Activated CD4-positive, alpha-beta T cell treated with anti-CD3 and anti-CD28 coated beads, Interleukin-2, amount 10 ng/mL, durations not matched to agents 24 days and 14 days (primary cell): ENCODE measurements at regions of chr2 and their contacts with region 1.

Region 1: DNA sequence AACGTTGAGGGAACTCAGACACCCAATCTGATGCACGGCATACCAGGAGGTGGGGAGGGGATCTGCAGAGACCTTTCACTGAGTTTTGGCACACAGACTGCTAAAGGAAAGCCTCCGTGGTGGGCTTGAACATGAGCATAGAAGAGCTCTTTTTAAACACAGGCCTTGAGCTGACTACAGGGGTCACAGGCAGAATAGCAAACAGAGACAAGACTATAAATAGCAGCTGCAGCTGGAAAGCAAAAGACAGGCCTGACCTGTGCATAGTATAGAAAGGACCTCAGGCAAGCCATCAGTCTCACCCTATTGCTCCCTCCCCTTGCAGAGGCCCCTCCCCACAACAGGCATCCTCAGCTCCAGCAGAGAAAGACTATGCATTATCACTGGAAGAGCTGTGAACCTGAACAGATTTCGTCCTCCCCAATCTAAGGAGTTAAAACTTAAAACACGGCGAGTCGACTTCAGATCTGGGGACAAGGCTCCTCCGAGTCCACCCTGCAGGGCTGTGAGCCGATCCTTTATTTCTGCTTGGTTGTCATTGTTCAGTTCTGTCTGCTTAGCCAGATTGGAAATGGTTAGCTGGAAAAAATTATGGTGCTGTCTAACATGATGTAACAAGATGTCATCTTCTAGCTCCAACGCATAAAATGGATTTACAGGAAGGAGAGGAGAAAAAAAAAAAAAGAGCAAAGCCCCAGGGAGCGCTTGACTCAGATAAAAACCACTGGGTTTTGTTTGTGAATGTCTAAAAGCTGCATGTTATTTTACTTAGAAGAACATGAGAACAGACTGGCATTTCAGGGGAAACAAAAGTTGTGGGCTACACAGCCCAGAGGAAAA is 25.2 kb upstream of the LCLAT1 start:
- DNase-seq: peak; percentile 76
- H3K4me3 Mint-ChIP-seq: peak overlapping the region; percentile 62
- H3K27ac Mint-ChIP-seq: peak overlapping the region; percentile 89
- H3K4me1 Mint-ChIP-seq: peaks cover 34% of the 10 kb centered on the region
- H3K27me3 Mint-ChIP-seq: no peaks in the 10 kb centered on the region

Region 2: DNA sequence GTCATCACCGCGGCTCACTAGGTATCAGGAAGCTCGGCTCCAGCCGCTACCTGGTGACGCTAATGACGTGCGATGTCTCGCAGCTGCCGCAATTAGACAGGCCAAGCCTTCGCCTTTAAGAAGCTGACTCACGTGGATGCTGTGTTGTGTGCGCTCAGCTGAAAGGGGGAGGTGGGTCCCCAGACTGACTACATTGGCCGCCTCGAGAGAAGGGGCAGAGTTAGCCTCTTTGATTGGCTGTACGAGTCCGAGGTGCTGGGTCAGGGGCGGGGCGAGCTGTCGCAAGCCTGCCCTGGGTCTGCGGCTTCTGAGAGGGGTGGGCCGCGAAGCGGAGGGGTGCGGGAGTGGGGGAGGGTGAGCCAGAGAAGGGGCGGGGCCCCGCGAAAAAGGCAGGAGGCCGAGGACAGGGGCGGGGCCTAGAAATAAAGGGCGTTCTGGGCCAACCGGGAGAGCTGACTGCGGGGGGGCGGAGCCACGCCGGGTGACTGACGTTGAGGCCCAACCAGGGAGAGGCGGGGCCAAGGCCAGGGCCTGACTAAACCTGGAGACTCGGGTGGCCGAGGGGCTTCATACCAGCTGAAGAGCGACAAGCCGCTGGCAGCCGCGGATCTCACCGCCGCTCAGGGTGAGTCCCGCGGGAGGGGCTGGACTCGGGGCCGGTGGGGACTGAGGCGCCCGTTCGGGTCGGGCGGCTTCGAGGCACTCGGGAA is 275.2 kb before region 1 on chr2 and contains the start of gene YPEL5:
- intact Hi-C with region 1: loop called (anchors 2 kb)
- DNase-seq: peak; percentile 100
- H3K4me3 Mint-ChIP-seq: peak within 1 kb of the TSS; percentile 87
- H3K27ac Mint-ChIP-seq: peak within 1 kb of the TSS; percentile 97
- H3K4me1 Mint-ChIP-seq: peaks cover 32% of the 10 kb centered on the region
- H3K27me3 Mint-ChIP-seq: no peaks in the 10 kb centered on the region
- total RNA-seq, gene YPEL5: 16.8 and 19.6 TPM in 2 replicates

Region 3: GRCh38 chr2:30225131-30225762 is 196.6 kb before region 1 on chr2:
- intact Hi-C with region 1: loop called (anchors 1 kb)
- DNase-seq: peak; percentile 88
- H3K4me3 Mint-ChIP-seq: peak overlapping the region; percentile 89
- H3K27ac Mint-ChIP-seq: peak overlapping the region; percentile 98
- H3K4me1 Mint-ChIP-seq: peaks cover 63% of the 10 kb centered on the region
- H3K27me3 Mint-ChIP-seq: no peaks in the 10 kb centered on the region

Region 4: DNA sequence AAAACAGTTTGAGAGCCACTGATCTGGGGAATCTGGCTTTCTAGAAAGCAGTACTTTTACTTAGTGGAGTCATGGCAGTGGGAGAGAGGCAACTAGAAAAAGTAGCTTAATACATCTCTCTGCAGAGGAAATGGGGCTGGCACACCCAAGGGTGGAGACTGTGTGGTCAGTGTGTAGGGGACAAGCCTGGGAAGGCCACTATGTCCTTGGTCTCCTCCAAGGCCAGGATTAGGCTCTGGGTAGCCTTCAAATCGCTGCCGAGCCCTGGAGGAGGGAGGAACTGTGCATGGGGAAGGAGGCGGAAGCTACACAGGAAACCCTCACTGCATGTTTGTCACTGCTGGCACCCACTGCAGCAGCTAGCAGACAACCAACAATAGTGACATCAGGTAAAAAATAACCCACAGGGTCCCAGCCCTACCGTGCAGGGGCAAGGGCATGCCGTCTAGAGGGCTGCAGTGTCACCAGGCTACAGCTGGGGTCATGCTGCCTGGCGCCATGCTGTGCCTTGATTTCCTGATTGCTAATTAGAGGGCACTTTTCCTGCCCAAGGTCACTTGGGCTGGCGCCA is 155.7 kb before region 1 on chr2:
- intact Hi-C with region 1: loop called (anchors 1 kb)
- DNase-seq: peak; percentile 86
- H3K4me3 Mint-ChIP-seq: peak overlapping the region; percentile 90
- H3K27ac Mint-ChIP-seq: peak overlapping the region; percentile 99
- H3K4me1 Mint-ChIP-seq: peaks cover 70% of the 10 kb centered on the region
- H3K27me3 Mint-ChIP-seq: no peaks in the 10 kb centered on the region

Region 5: DNA sequence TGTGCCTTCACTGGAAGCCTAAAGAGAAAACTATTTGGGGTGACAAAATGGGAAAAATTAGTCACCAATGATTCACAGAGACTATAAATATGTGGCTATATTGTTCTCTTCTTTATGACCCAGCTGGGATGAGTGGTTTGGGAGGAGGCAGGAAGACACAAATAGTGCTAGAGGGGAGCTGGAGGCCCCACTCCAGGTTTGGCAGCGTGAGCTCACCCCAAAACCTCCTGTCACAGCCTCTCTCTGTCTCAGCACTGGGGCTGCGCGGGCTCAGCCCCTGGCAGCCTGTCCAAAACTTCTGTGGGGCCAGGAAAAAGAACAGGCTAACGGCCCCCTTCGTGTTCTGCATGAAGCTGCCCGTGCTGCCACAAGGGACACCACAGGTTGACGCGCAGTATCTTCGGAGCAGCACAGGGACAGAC is 47.9 kb before region 1 on chr2:
- intact Hi-C with region 1: loop called (anchors 2 kb)
- DNase-seq: no peak
- H3K4me3 Mint-ChIP-seq: no peak overlapping the region
- H3K27ac Mint-ChIP-seq: peak overlapping the region; percentile 51
- H3K4me1 Mint-ChIP-seq: peaks cover 37% of the 10 kb centered on the region
- H3K27me3 Mint-ChIP-seq: no peaks in the 10 kb centered on the region

Region 6: DNA sequence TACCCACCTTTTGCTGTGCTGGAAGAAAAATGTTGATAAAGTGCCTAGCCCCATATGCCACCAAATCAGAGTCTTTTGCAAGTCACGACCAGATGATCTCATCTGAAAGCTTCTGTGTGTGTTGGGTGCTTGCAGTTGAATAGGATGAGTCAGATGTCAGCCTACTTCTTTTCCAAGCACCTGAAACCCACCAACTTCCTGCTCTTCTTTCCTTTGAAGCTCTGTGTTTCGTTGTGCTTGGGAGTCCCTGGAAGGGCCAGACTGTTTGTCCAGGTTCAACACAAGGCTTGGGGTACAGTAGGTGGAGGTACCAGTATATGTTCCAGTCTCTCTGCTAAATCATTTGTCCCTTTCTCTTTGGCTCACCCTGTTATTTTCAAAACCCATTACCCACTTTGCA is 11.6 kb before region 1 on chr2:
- intact Hi-C with region 1: loop called (anchors 1 kb)
- DNase-seq: peak; percentile 69
- H3K4me3 Mint-ChIP-seq: peak overlapping the region; percentile 0
- H3K27ac Mint-ChIP-seq: peak overlapping the region; percentile 78
- H3K4me1 Mint-ChIP-seq: peaks cover 43% of the 10 kb centered on the region
- H3K27me3 Mint-ChIP-seq: no peaks in the 10 kb centered on the region

Region 7: GRCh38 chr2:30711646-30712085 is 289.8 kb after region 1 on chr2:
- intact Hi-C with region 1: loop called (anchors 10 kb)
- DNase-seq: peak; percentile 96
- H3K4me3 Mint-ChIP-seq: no peak overlapping the region
- H3K27ac Mint-ChIP-seq: peak overlapping the region; percentile 67
- H3K4me1 Mint-ChIP-seq: peaks cover 15% of the 10 kb centered on the region
- H3K27me3 Mint-ChIP-seq: peaks cover 6% of the 10 kb centered on the region